ENCODE measurements at regions of chr12 and their contacts with region 1.

Region 1: GRCh38 chr12:130041983-130042812 is 120.1 kb upstream of the FZD10 start:
- DNase-seq: peak in 5 of 9 experiments; percentile 9 to 35 (median 31)
- ATAC-seq: no peak
- H3K4me3 ChIP-seq: no peak overlapping the region
- H3K4me3 Mint-ChIP-seq: no peak overlapping the region
- H3K27ac ChIP-seq: no peak overlapping the region
- H3K27ac Mint-ChIP-seq: no peak overlapping the region
- H3K4me1 ChIP-seq: no peaks in the 10 kb centered on the region
- H3K4me1 Mint-ChIP-seq: no peaks in the 10 kb centered on the region
- H3K27me3 ChIP-seq: peaks cover 0 to 14% of the 10 kb centered on the region in 2 experiments
- H3K27me3 Mint-ChIP-seq: peaks cover 51% of the 10 kb centered on the region
- CTCF ChIP-seq: peak; percentile 49

Region 2: GRCh38 chr12:129949651-129950050 is 92.5 kb before region 1 on chr12:
- CTCF ChIA-PET with region 1: no interaction called
- POLR2A ChIA-PET with region 1: no interaction called
- intact Hi-C with region 1: no loop called
- DNase-seq: no peak
- ATAC-seq: no peak
- H3K4me3 ChIP-seq: no peak overlapping the region
- H3K4me3 Mint-ChIP-seq: no peak overlapping the region
- H3K27ac ChIP-seq: no peak overlapping the region
- H3K27ac Mint-ChIP-seq: no peak overlapping the region
- H3K4me1 ChIP-seq: no peaks in the 10 kb centered on the region
- H3K4me1 Mint-ChIP-seq: no peaks in the 10 kb centered on the region
- H3K27me3 ChIP-seq: no peaks in the 10 kb centered on the region
- H3K27me3 Mint-ChIP-seq: no peaks in the 10 kb centered on the region
- CTCF ChIP-seq: no peak

Region 3: GRCh38 chr12:130747867-130748740 is 705.9 kb after region 1 on chr12:
- CTCF ChIA-PET with region 1: interaction called, 9 read pairs
- POLR2A ChIA-PET with region 1: no interaction called
- intact Hi-C with region 1: loop called (anchors 1 to 5 kb)
- DNase-seq: peak; percentile 38 to 79 (median 70)
- ATAC-seq: peak; percentile 73
- H3K4me3 ChIP-seq: no peak overlapping the region
- H3K4me3 Mint-ChIP-seq: peak overlapping the region; percentile 33
- H3K27ac ChIP-seq: no peak overlapping the region
- H3K27ac Mint-ChIP-seq: no peak overlapping the region
- H3K4me1 ChIP-seq: peaks cover 6% of the 10 kb centered on the region
- H3K4me1 Mint-ChIP-seq: peaks cover 6% of the 10 kb centered on the region
- H3K27me3 ChIP-seq: peaks cover 0 to 2% of the 10 kb centered on the region in 2 experiments
- H3K27me3 Mint-ChIP-seq: peaks cover 19% of the 10 kb centered on the region
- CTCF ChIP-seq: peak; percentile 83

Measured in CD8-positive, alpha-beta T cell (primary cell).